Caco-2 (cell line): ENCODE measurements at regions of chr2 and their contacts with region 1.

Region 1: GRCh38 chr2:135531231-135532228 is at the start of gene R3HDM1:
- DNase-seq: peak; percentile 98 to 99
- H3K4me3 ChIP-seq: peak within 1 kb of the TSS; percentile 86
- H3K4me3 Mint-ChIP-seq: no peak within 1 kb of the TSS
- H3K27ac Mint-ChIP-seq: peak within 1 kb of the TSS; percentile 45
- H3K4me1 ChIP-seq: peaks cover 7% of the 10 kb centered on the region; the same call in 1 of the 2 replicates
- H3K4me1 Mint-ChIP-seq: peaks cover 6% of the 10 kb centered on the region
- H3K27me3 ChIP-seq: no peaks in the 10 kb centered on the region
- H3K27me3 Mint-ChIP-seq: no peaks in the 10 kb centered on the region
- CTCF ChIP-seq: peak; percentile 23 to 39
- total RNA-seq, gene R3HDM1: 44.4 and 45.3 TPM in 2 replicates

Region 2: DNA sequence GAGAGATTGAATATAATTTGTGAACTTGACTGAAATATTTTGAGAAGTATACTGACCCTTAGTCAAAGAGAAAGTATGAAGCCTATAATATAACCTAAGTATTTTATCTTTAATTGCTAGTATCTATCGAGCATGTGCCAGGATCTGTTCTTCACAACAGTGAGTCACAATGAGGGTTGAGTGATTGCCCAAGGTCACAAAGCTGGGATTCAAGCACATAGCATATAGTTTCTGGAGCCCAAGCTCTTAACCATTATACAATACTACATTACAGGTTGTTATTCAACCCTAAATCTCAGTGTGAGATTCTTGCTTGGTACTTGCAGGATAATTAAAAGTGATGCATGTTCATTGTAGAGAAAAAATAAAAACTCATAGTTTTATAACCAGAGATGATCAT is 382.3 kb before region 1 on chr2:
- CTCF ChIA-PET with region 1: no interaction called
- POLR2A ChIA-PET with region 1: interaction called, 17 read pairs
- intact Hi-C with region 1: no loop called
- DNase-seq: no peak
- H3K4me3 ChIP-seq: no peak overlapping the region
- H3K4me3 Mint-ChIP-seq: no peak overlapping the region
- H3K27ac Mint-ChIP-seq: no peak overlapping the region
- H3K4me1 ChIP-seq: peaks cover 32% of the 10 kb centered on the region
- H3K4me1 Mint-ChIP-seq: peaks cover 20% of the 10 kb centered on the region
- H3K27me3 ChIP-seq: no peaks in the 10 kb centered on the region
- H3K27me3 Mint-ChIP-seq: no peaks in the 10 kb centered on the region
- CTCF ChIP-seq: no peak

Region 3: GRCh38 chr2:135271006-135271405 is 260.5 kb before region 1 on chr2:
- CTCF ChIA-PET with region 1: no interaction called
- POLR2A ChIA-PET with region 1: no interaction called
- intact Hi-C with region 1: loop called (anchors 5 kb)
- DNase-seq: peak; percentile 60 to 62
- H3K4me3 ChIP-seq: no peak overlapping the region
- H3K4me3 Mint-ChIP-seq: no peak overlapping the region
- H3K27ac Mint-ChIP-seq: no peak overlapping the region
- H3K4me1 ChIP-seq: peaks cover 17% of the 10 kb centered on the region; the same call in 1 of the 2 replicates
- H3K4me1 Mint-ChIP-seq: peaks cover 15% of the 10 kb centered on the region
- H3K27me3 ChIP-seq: no peaks in the 10 kb centered on the region
- H3K27me3 Mint-ChIP-seq: no peaks in the 10 kb centered on the region
- CTCF ChIP-seq: no peak

Region 4: DNA sequence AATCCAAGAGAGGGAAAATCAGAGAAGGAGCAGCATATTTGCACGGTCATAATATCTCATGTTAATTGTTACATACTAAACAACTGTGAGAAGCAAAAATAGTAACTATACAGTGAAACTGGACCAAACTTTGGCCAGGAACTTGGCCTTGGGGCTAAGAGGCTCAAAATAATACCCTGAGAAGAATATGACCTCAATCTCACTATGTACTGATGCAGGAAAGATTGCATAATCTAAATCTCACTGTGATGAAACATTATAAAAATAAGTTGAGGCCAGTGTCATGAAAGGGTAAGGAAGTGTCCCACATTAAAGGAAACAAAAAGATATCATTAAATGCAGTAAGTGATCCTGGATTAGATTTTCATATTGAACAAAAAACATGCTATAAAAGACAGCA is 37.0 kb before region 1 on chr2:
- CTCF ChIA-PET with region 1: no interaction called
- POLR2A ChIA-PET with region 1: no interaction called
- intact Hi-C with region 1: no loop called
- DNase-seq: no peak
- H3K4me3 ChIP-seq: no peak overlapping the region
- H3K4me3 Mint-ChIP-seq: no peak overlapping the region
- H3K27ac Mint-ChIP-seq: no peak overlapping the region
- H3K4me1 ChIP-seq: no peaks in the 10 kb centered on the region
- H3K4me1 Mint-ChIP-seq: no peaks in the 10 kb centered on the region
- H3K27me3 ChIP-seq: no peaks in the 10 kb centered on the region
- H3K27me3 Mint-ChIP-seq: no peaks in the 10 kb centered on the region
- CTCF ChIP-seq: no peak

Region 5: DNA sequence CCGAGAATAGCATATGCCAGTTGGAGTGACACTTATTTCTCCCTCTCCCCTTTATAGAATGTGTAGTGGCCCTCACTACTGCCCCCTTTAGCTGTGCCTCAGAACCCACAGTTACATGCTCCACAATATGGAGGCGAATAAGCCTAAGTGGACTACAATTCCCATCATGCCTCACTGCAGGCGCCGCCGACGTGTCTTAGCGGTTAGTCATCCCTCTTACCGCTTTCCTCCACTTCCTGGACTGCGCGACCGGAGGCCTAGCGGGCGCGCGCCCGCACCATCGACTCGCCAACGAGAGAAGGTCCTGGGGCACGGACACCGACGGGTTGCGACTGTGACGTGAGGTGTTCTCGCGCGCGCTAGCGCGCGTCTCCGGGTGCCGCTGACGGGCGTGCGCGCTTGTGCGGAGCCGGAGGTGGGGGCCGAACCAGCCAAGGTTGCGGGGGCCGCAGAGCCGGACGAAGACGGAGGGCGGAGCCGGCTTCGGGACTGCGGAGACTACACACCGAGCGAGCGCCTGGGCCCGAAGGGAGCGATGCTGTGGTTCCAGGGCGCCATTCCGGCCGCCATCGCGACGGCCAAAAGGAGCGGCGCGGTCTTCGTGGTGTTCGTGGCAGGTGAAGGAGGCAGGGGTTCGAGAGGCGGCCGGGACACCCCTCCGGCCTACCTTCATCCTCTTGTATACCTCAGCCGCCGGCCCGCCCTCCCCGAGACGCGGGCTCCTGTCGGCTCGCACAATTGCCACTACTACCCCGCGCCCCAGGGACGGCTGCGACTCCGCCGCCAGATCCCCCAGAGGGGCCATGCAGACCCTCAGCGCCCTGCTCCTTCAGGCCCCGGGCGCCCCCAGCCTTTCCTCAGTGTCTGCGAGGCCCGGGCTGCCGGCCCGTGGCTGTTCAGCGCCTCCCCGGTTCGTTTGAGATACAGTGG is 210.1 kb after region 1 on chr2 and contains the start of gene UBXN4:
- CTCF ChIA-PET with region 1: interaction called, 5 read pairs
- POLR2A ChIA-PET with region 1: interaction called, 3 read pairs
- intact Hi-C with region 1: loop called (anchors 1 kb)
- DNase-seq: peak; percentile 96 to 99
- H3K4me3 ChIP-seq: peak within 1 kb of the TSS; percentile 92
- H3K4me3 Mint-ChIP-seq: peak within 1 kb of the TSS; percentile 90
- H3K27ac Mint-ChIP-seq: peak within 1 kb of the TSS; percentile 89
- H3K4me1 ChIP-seq: peaks cover 18% of the 10 kb centered on the region; the same call in 1 of the 2 replicates
- H3K4me1 Mint-ChIP-seq: peaks cover 8% of the 10 kb centered on the region
- H3K27me3 ChIP-seq: no peaks in the 10 kb centered on the region
- H3K27me3 Mint-ChIP-seq: no peaks in the 10 kb centered on the region
- CTCF ChIP-seq: peak; percentile 55 to 64
- total RNA-seq, gene UBXN4: 98.1 and 99.3 TPM in 2 replicates